Activated T-helper 1 cell treated with anti-CD3 and anti-CD28 coated beads, Interleukin-12 subunit alpha, Interleukin-12 subunit beta, Interleukin-2, Interleukin-4 antibody, amounts not matched to agents 30 ng/mL and 10 ng/mL and 1 ng/mL, durations not matched to agents 14 hours and 24 hours and 36 hours (primary cell): ENCODE measurements at regions of chr20 and their contacts with region 1.

Region 1: GRCh38 chr20:57596998-57597939 is 23.0 kb downstream of the ZBP1 start:
- DNase-seq: peak; percentile 59
- H3K4me3 Mint-ChIP-seq: no peak overlapping the region
- H3K27ac Mint-ChIP-seq: no peak overlapping the region
- H3K4me1 Mint-ChIP-seq: peaks cover 9% of the 10 kb centered on the region
- H3K27me3 Mint-ChIP-seq: peaks cover 33% of the 10 kb centered on the region

Region 2: GRCh38 chr20:57383447-57384347 is 213.6 kb before region 1 on chr20:
- intact Hi-C with region 1: loop called (anchors 1 kb)
- DNase-seq: no peak
- H3K4me3 Mint-ChIP-seq: no peak overlapping the region
- H3K27ac Mint-ChIP-seq: no peak overlapping the region
- H3K4me1 Mint-ChIP-seq: peaks cover 14% of the 10 kb centered on the region
- H3K27me3 Mint-ChIP-seq: no peaks in the 10 kb centered on the region

Region 3: GRCh38 chr20:57514273-57514751 is 83.0 kb before region 1 on chr20:
- intact Hi-C with region 1: loop called (anchors 1 kb)
- DNase-seq: peak; percentile 6
- H3K4me3 Mint-ChIP-seq: no peak overlapping the region
- H3K27ac Mint-ChIP-seq: no peak overlapping the region
- H3K4me1 Mint-ChIP-seq: no peaks in the 10 kb centered on the region
- H3K27me3 Mint-ChIP-seq: peaks cover 22% of the 10 kb centered on the region

Region 4: DNA sequence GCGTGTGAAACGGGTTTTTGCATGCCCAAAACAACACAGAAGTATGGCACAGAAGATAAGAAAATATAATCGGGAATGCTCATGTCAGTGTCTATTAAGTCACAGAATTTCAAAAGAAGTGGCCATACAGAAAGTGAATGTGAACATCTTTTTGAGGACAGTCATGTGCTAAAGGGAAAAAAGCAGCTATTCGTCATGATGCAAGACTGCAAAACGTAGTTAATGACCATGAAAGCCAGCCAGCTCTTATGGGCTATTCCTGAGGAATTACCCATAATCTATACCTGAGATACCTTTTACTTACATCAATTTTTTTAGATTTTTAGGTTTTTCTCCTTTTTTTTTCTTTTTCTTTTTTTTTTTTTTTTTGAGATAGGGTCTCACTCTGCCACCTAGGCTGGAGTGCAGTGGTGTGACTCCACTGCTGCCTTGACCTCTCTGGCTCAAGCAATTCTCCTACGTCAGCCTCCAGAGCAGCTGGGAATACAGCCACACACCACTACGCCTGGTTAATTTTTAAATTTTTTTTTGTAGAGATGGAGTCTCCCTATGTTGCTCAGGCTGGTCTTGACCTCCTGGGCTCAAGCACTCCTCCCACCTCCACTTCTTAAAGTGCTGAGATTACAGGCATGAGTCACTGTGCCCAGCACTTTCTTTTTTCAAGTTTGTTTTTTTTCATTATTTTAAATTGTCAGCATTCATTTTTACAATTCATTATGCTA is 41.1 kb after region 1 on chr20:
- intact Hi-C with region 1: no loop called
- DNase-seq: no peak
- H3K4me3 Mint-ChIP-seq: no peak overlapping the region
- H3K27ac Mint-ChIP-seq: no peak overlapping the region
- H3K4me1 Mint-ChIP-seq: peaks cover 14% of the 10 kb centered on the region
- H3K27me3 Mint-ChIP-seq: peaks cover 70% of the 10 kb centered on the region

Region 5: GRCh38 chr20:57748601-57749130 is 151.4 kb after region 1 on chr20:
- intact Hi-C with region 1: no loop called
- DNase-seq: peak; percentile 6
- H3K4me3 Mint-ChIP-seq: no peak overlapping the region
- H3K27ac Mint-ChIP-seq: peak overlapping the region; percentile 18
- H3K4me1 Mint-ChIP-seq: peaks cover 12% of the 10 kb centered on the region
- H3K27me3 Mint-ChIP-seq: peaks cover 23% of the 10 kb centered on the region

Region 6: DNA sequence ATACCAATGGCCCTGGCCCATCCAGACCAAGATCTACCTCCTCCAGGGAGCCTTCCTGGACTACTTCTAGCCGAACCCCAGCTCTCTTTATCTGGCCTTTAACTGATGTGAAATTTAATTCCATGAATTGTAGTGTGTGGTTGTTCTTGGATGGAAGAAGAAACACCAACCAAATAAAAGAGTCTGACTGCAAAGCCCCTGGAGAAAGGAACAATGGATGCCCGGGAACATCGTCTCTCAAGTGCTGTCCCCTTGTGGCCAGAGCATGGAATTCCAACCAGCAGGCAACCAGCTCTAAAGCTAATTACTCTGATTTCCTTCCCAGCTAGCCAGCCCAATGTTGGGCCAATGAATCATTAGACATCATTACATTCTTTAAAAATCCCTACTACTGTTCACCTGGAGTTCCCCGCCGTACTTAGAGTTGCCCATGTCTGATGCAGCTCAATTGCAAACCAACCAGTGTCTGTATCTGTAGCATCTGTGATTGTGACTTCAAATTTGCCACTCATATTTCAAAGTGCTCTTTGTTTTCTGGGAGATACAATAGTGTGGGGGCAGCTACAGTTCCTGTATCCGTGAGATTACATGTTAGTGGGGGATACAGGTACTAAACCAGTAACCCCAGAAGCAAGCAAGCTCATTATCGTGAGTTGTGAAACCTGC is 490.1 kb after region 1 on chr20:
- intact Hi-C with region 1: loop called (anchors 1 kb)
- DNase-seq: no peak
- H3K4me3 Mint-ChIP-seq: no peak overlapping the region
- H3K27ac Mint-ChIP-seq: no peak overlapping the region
- H3K4me1 Mint-ChIP-seq: no peaks in the 10 kb centered on the region
- H3K27me3 Mint-ChIP-seq: peaks cover 8% of the 10 kb centered on the region

Region 7: DNA sequence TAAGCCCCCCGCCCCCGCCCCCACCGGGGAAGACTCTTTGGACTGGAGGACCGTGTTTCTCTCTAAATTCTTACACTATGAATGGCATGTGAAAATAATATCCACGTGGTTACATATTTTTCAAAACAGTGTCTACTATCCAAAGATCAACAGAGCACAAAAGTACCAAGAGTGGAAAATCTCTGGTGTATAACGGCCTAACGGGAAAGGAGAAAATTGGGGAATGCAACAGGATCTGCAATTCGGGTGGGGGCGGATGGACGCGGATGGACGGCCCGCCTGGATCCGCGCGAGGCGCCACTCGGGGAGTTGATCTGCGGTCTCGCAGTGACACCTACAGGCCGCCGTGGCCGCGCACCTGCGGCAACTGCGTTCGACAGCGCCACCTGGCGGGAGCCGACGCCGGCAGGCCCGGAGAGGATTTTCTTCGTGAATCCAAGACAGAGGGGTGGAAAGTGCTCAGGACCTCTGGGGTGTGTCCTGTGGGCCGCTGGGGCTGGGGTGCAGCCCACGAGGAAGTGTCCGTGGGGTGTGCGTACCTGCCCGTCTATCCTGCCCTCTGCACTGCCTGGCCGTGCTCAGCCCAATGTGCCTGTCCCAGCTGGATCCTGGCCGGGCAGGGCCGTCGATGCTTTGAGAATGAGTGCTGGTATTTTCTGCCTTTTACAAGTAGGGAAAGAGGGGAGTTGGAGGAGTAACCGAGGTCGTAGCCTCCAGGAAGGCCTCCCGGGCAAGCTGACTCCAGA is 612.6 kb after region 1 on chr20:
- intact Hi-C with region 1: loop called (anchors 1 kb)
- DNase-seq: peak; percentile 80
- H3K4me3 Mint-ChIP-seq: no peak overlapping the region
- H3K27ac Mint-ChIP-seq: peak overlapping the region; percentile 43
- H3K4me1 Mint-ChIP-seq: peaks cover 7% of the 10 kb centered on the region
- H3K27me3 Mint-ChIP-seq: peaks cover 25% of the 10 kb centered on the region